Common myeloid progenitor, CD34-positive (primary cell): ENCODE measurements at regions of chr6 and their contacts with region 1.

Region 1: GRCh38 chr6:107655245-107655644 is 165.3 kb downstream of the SOBP start:
- DNase-seq: peak; percentile 16 to 50 (median 37)
- H3K4me3 ChIP-seq: no peak overlapping the region
- H3K27ac ChIP-seq: no peak overlapping the region
- H3K4me1 ChIP-seq: peaks cover 0 to 10% (median 6%) of the 10 kb centered on the region in 4 experiments
- H3K27me3 ChIP-seq: no peaks in the 10 kb centered on the region

Region 2: DNA sequence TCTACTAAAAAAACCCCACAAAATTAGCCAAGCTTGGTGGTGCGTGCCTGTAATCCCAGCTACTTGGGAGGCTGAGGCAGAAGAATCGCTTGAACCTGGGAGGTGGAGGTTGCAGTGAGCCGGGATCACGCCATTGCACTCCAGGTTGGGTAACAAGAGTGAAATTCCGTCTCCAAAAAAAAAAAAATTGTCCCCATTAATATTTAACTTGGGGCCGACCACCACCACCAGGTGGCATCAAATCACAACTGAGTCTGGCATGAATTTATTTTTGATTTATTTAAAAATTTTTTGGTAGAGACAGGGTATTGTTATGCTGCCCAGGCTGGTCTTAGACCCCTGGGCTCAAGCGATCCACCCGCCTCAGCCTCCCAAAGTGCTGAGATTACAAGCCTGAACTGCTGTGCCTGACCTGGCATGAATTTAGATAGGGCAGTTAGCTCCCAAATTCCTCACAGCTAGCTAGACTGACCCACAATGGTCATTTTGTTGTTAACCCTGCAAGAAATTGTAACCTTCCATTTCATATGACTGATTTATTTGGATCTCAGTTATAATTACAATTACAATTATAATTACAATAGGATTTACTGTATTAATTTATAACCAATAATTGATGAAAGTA is 522.8 kb before region 1 on chr6:
- CTCF ChIA-PET with region 1: interaction called, 14 read pairs
- POLR2A ChIA-PET with region 1: no interaction called
- DNase-seq: peak; percentile 40 to 63 (median 55)
- H3K4me3 ChIP-seq: no peak overlapping the region
- H3K27ac ChIP-seq: no peak overlapping the region
- H3K4me1 ChIP-seq: peaks cover 0 to 7% (median 0%) of the 10 kb centered on the region in 4 experiments
- H3K27me3 ChIP-seq: no peaks in the 10 kb centered on the region

Region 3: GRCh38 chr6:107600936-107601335 is 54.3 kb before region 1 on chr6:
- CTCF ChIA-PET with region 1: no interaction called
- POLR2A ChIA-PET with region 1: no interaction called
- DNase-seq: no peak
- H3K4me3 ChIP-seq: no peak overlapping the region
- H3K27ac ChIP-seq: no peak overlapping the region
- H3K4me1 ChIP-seq: no peaks in the 10 kb centered on the region
- H3K27me3 ChIP-seq: peaks cover 0 to 2% (median 0%) of the 10 kb centered on the region in 5 experiments